ENCODE measurements at regions of chr17 and their contacts with region 1.

Region 1: GRCh38 chr17:12545877-12546513 is 119.7 kb upstream of the MYOCD start:
- DNase-seq: no peak

Region 2: GRCh38 chr17:12256380-12256995 is 289.5 kb before region 1 on chr17:
- intact Hi-C with region 1: loop called (anchors 10 kb)
- DNase-seq: no peak

Region 3: GRCh38 chr17:12348476-12348875 is 197.5 kb before region 1 on chr17:
- intact Hi-C with region 1: no loop called
- DNase-seq: no peak

Region 4: DNA sequence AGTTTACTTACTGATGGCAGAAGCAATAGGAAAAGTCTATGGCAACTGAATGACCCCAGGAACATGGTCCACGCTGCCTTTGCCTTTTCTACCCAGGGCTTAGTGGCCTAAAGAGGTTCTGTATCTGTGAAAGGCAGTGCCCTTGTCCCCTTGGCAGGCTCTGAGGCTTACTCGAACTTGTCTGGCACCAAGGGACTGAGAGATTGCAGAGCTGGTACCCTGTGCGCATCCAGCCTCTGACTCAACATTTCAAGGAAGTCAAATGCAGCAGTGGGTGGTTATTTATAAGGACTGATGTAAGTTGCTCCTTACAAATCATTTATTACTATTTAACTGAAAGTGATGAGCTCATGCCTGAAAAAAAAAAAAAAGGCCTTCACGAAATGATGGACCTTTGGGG is 180.2 kb before region 1 on chr17:
- intact Hi-C with region 1: loop called (anchors 10 kb)
- DNase-seq: peak; percentile 77

Region 5: GRCh38 chr17:12620200-12620720 is 74.3 kb after region 1 on chr17:
- intact Hi-C with region 1: loop called (anchors 5 kb)
- DNase-seq: no peak

Region 6: GRCh38 chr17:12667299-12667958 is 121.4 kb after region 1 on chr17:
- intact Hi-C with region 1: loop called (anchors 1 kb)
- DNase-seq: no peak

Region 7: GRCh38 chr17:12744298-12744697 is 198.3 kb after region 1 on chr17:
- intact Hi-C with region 1: loop called (anchors 5 kb)
- DNase-seq: peak; percentile 84

Region 8: GRCh38 chr17:13002766-13003451 is 456.9 kb after region 1 on chr17:
- intact Hi-C with region 1: loop called (anchors 5 kb)
- DNase-seq: peak; percentile 84